Activated CD4-positive, alpha-beta memory T cell treated with anti-CD3 and anti-CD28 coated beads for 36 hours (primary cell): ENCODE measurements at regions of chr5 and their contacts with region 1.

Region 1: GRCh38 chr5:144191998-144192397 is 21.3 kb downstream of the KCTD16 start:
- DNase-seq: no peak
- H3K4me3 Mint-ChIP-seq: no peak overlapping the region
- H3K27ac Mint-ChIP-seq: no peak overlapping the region
- H3K4me1 Mint-ChIP-seq: peaks cover 31% of the 10 kb centered on the region
- H3K27me3 Mint-ChIP-seq: no peaks in the 10 kb centered on the region

Region 2: DNA sequence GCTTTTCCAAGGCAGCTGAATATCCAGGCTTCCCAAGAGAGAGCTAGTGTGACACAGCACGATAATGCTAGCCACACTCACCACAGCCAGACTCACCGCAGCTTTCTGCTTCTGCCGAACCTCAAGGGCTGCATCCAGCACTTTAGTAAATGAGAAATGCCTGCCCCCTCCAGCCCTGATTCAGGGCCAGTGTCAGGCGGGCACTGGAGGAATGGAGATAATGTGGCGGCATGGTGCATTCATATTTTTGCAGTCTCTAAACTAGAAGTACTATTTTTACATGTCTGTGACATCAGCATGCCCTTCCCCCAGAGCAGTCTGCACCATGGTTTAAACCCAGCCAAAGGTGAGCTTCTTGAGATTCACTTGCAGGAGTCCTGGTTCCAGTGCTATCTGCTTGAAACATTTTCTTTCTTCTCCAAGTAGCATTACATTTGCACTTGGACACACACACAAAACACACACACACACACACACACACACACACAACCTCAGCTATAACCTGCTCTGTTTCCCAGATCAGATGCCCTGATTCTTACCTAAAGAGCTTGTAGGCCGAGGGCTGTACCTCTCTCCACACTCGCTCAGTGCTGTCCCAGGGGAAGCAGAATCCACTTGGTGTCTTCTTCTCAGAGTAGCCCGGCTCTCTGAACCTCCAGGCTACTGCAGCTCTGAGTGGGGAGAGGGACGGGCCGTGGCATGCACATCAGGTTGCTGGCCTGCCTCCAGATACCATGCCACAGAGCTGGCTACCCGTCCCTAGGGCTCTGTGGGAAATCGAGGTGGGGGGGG is 1506.4 kb before region 1 on chr5 and contains the start of gene FGF1:
- CTCF ChIA-PET with region 1: no interaction called
- POLR2A ChIA-PET with region 1: no interaction called
- intact Hi-C with region 1: no loop called
- DNase-seq: no peak
- H3K4me3 Mint-ChIP-seq: no peak within 1 kb of the TSS
- H3K27ac Mint-ChIP-seq: no peak within 1 kb of the TSS
- H3K4me1 Mint-ChIP-seq: no peaks in the 10 kb centered on the region
- H3K27me3 Mint-ChIP-seq: peaks cover 6% of the 10 kb centered on the region
- total RNA-seq, gene FGF1: not detected

Region 3: GRCh38 chr5:143008809-143009521 is 1183.0 kb before region 1 on chr5:
- CTCF ChIA-PET with region 1: no interaction called
- POLR2A ChIA-PET with region 1: no interaction called
- intact Hi-C with region 1: loop called (anchors 1 kb)
- DNase-seq: peak; percentile 90
- H3K4me3 Mint-ChIP-seq: peak overlapping the region; percentile 31
- H3K27ac Mint-ChIP-seq: peak overlapping the region; percentile 73
- H3K4me1 Mint-ChIP-seq: peaks cover 69% of the 10 kb centered on the region
- H3K27me3 Mint-ChIP-seq: no peaks in the 10 kb centered on the region

Region 4: GRCh38 chr5:143213851-143214363 is 978.1 kb before region 1 on chr5:
- CTCF ChIA-PET with region 1: no interaction called
- POLR2A ChIA-PET with region 1: no interaction called
- intact Hi-C with region 1: loop called (anchors 5 kb)
- DNase-seq: peak; percentile 63
- H3K4me3 Mint-ChIP-seq: no peak overlapping the region
- H3K27ac Mint-ChIP-seq: peak overlapping the region; percentile 79
- H3K4me1 Mint-ChIP-seq: peaks cover 57% of the 10 kb centered on the region
- H3K27me3 Mint-ChIP-seq: no peaks in the 10 kb centered on the region

Region 5: DNA sequence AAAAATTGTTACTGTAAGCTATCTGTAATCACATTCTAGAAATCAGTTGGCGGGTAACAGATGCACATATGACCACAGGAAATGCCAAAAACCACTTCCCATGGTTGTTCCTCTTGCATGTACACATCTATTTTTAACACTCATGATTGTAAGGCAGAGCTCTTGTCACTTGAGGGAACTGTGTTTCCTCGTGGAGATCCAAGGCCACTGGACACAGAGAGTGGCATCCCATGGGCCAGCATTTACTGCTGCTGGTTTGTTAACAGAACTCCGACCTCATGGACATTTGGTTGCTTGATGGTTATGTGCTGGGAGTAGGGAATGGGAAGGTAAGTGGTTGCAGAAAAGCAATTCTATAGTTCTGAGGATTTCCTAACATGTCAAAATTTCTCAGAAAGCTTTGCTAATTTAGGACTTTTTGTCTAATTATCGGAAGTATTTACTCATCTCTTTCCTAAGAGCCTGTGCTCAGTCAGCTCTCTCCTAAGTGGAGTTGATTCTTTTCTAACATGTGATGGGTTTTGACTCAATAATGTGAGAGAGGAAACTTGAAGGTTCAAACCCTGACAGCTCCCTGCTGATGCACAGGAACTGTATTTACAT is 586.5 kb before region 1 on chr5:
- CTCF ChIA-PET with region 1: no interaction called
- POLR2A ChIA-PET with region 1: no interaction called
- intact Hi-C with region 1: loop called (anchors 1 kb)
- DNase-seq: peak; percentile 52
- H3K4me3 Mint-ChIP-seq: peak overlapping the region; percentile 28
- H3K27ac Mint-ChIP-seq: peak overlapping the region; percentile 86
- H3K4me1 Mint-ChIP-seq: peaks cover 34% of the 10 kb centered on the region
- H3K27me3 Mint-ChIP-seq: peaks cover 3% of the 10 kb centered on the region

Region 6: GRCh38 chr5:143923634-143924255 is 268.3 kb before region 1 on chr5:
- CTCF ChIA-PET with region 1: no interaction called
- POLR2A ChIA-PET with region 1: no interaction called
- intact Hi-C with region 1: loop called (anchors 5 kb)
- DNase-seq: no peak
- H3K4me3 Mint-ChIP-seq: no peak overlapping the region
- H3K27ac Mint-ChIP-seq: no peak overlapping the region
- H3K4me1 Mint-ChIP-seq: peaks cover 9% of the 10 kb centered on the region
- H3K27me3 Mint-ChIP-seq: no peaks in the 10 kb centered on the region

Region 7: GRCh38 chr5:144203750-144204596 is 12.0 kb after region 1 on chr5:
- CTCF ChIA-PET with region 1: interaction called, 29 read pairs
- POLR2A ChIA-PET with region 1: no interaction called
- intact Hi-C with region 1: no loop called
- DNase-seq: peak; percentile 25
- H3K4me3 Mint-ChIP-seq: no peak overlapping the region
- H3K27ac Mint-ChIP-seq: no peak overlapping the region
- H3K4me1 Mint-ChIP-seq: peaks cover 19% of the 10 kb centered on the region
- H3K27me3 Mint-ChIP-seq: peaks cover 45% of the 10 kb centered on the region